ENCODE measurements at regions of chr3 and their contacts with region 1.

Region 1: GRCh38 chr3:193465992-193466608 is 87.5 kb upstream of the ATP13A5 start:
- DNase-seq: no peak
- H3K4me3 ChIP-seq: no peak overlapping the region
- H3K27ac ChIP-seq: no peak overlapping the region
- H3K4me1 ChIP-seq: no peaks in the 10 kb centered on the region
- H3K27me3 ChIP-seq: peaks cover 18% of the 10 kb centered on the region; the same call in 1 of the 2 replicates
- CTCF ChIP-seq: no peak

Region 2: GRCh38 chr3:193552923-193553322 is 86.8 kb after region 1 on chr3:
- CTCF ChIA-PET with region 1: no interaction called
- POLR2A ChIA-PET with region 1: no interaction called
- intact Hi-C with region 1: no loop called
- DNase-seq: no peak
- H3K4me3 ChIP-seq: no peak overlapping the region
- H3K27ac ChIP-seq: no peak overlapping the region
- H3K4me1 ChIP-seq: peaks cover 9% of the 10 kb centered on the region; the same call in 1 of the 2 replicates
- H3K27me3 ChIP-seq: no peaks in the 10 kb centered on the region
- CTCF ChIP-seq: no peak

Region 3: GRCh38 chr3:193564012-193564411 is 97.9 kb after region 1 on chr3:
- CTCF ChIA-PET with region 1: no interaction called
- POLR2A ChIA-PET with region 1: no interaction called
- intact Hi-C with region 1: loop called (anchors 2 kb)
- DNase-seq: no peak
- H3K4me3 ChIP-seq: no peak overlapping the region
- H3K27ac ChIP-seq: no peak overlapping the region
- H3K4me1 ChIP-seq: no peaks in the 10 kb centered on the region
- H3K27me3 ChIP-seq: no peaks in the 10 kb centered on the region
- CTCF ChIP-seq: no peak; the same call in 1 of the 2 replicates

Region 4: GRCh38 chr3:194404365-194405140 is 938.5 kb after region 1 on chr3:
- CTCF ChIA-PET with region 1: no interaction called
- POLR2A ChIA-PET with region 1: no interaction called
- intact Hi-C with region 1: loop called (anchors 5 kb)
- DNase-seq: peak; percentile 38 to 56
- H3K4me3 ChIP-seq: no peak overlapping the region
- H3K27ac ChIP-seq: no peak overlapping the region
- H3K4me1 ChIP-seq: no peaks in the 10 kb centered on the region
- H3K27me3 ChIP-seq: no peaks in the 10 kb centered on the region
- CTCF ChIP-seq: peak; percentile 96